B cell (primary cell): ENCODE measurements at regions of chr5 and their contacts with region 1.

Region 1: GRCh38 chr5:150357326-150358260 is at the start of gene TCOF1:
- DNase-seq: peak; percentile 97
- ATAC-seq: peak; percentile 99
- H3K4me3 ChIP-seq: peak within 1 kb of the TSS; percentile 53 to 77 (median 69)
- H3K4me3 Mint-ChIP-seq: peak within 1 kb of the TSS; percentile 90
- H3K27ac ChIP-seq: peak within 1 kb of the TSS; percentile 23 to 68
- H3K27ac Mint-ChIP-seq: peak within 1 kb of the TSS; percentile 88
- H3K4me1 ChIP-seq: peaks cover 35 to 54% of the 10 kb centered on the region in 2 donors
- H3K4me1 Mint-ChIP-seq: peaks cover 50% of the 10 kb centered on the region
- H3K27me3 ChIP-seq: no peaks in the 10 kb centered on the region
- H3K27me3 Mint-ChIP-seq: no peaks in the 10 kb centered on the region
- CTCF ChIP-seq: no peak
- total RNA-seq, gene TCOF1: 62.4 and 66.5 TPM in 2 replicates

Region 2: DNA sequence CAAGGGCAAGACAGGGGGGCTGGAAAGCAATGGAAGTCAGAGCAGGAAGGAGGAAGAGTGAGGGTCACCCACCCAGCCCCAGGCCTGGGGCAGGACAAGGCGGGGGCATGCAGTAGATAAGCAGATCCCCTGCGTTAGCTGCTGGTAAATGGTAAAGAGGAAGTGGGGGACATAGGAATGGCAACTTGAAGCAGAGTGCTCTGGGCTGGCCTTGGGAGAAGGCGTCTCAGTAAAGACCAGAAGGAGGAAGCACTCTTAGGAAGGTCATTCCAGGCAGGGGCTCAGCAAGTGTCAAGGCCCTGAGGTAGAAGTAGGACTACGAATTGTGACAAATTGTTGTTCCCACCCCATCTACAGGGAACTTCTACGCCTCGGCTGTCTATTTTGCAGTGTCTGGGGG is 15.0 kb after region 1 on chr5:
- CTCF ChIA-PET with region 1: no interaction called
- POLR2A ChIA-PET with region 1: no interaction called
- intact Hi-C with region 1: no loop called
- DNase-seq: no peak
- ATAC-seq: no peak
- H3K4me3 ChIP-seq: no peak overlapping the region
- H3K4me3 Mint-ChIP-seq: no peak overlapping the region
- H3K27ac ChIP-seq: no peak overlapping the region
- H3K27ac Mint-ChIP-seq: no peak overlapping the region
- H3K4me1 ChIP-seq: no peaks in the 10 kb centered on the region
- H3K4me1 Mint-ChIP-seq: no peaks in the 10 kb centered on the region
- H3K27me3 ChIP-seq: no peaks in the 10 kb centered on the region
- H3K27me3 Mint-ChIP-seq: no peaks in the 10 kb centered on the region
- CTCF ChIP-seq: no peak

Region 3: GRCh38 chr5:150656191-150657132 is 298.9 kb after region 1 on chr5:
- CTCF ChIA-PET with region 1: no interaction called
- POLR2A ChIA-PET with region 1: no interaction called
- intact Hi-C with region 1: loop called (anchors 2 kb)
- DNase-seq: peak; percentile 89
- ATAC-seq: peak; percentile 91
- H3K4me3 ChIP-seq: peak overlapping the region; percentile 21 to 69 (median 59)
- H3K4me3 Mint-ChIP-seq: peak overlapping the region; percentile 81
- H3K27ac ChIP-seq: no peak overlapping the region
- H3K27ac Mint-ChIP-seq: peak overlapping the region; percentile 84
- H3K4me1 ChIP-seq: peaks cover 10 to 15% of the 10 kb centered on the region in 2 donors
- H3K4me1 Mint-ChIP-seq: peaks cover 19% of the 10 kb centered on the region
- H3K27me3 ChIP-seq: no peaks in the 10 kb centered on the region
- H3K27me3 Mint-ChIP-seq: peaks cover 4% of the 10 kb centered on the region
- CTCF ChIP-seq: peak; percentile 77

Region 4: GRCh38 chr5:150700594-150701293 is 343.2 kb after region 1 on chr5 and contains the start of gene RBM22:
- CTCF ChIA-PET with region 1: no interaction called
- POLR2A ChIA-PET with region 1: no interaction called
- intact Hi-C with region 1: loop called (anchors 2 kb)
- DNase-seq: peak; percentile 94
- ATAC-seq: peak; percentile 96
- H3K4me3 ChIP-seq: peak within 1 kb of the TSS; percentile 65 to 100 (median 99)
- H3K4me3 Mint-ChIP-seq: no peak within 1 kb of the TSS
- H3K27ac ChIP-seq: peak within 1 kb of the TSS; percentile 96 to 97
- H3K27ac Mint-ChIP-seq: no peak within 1 kb of the TSS
- H3K4me1 ChIP-seq: peaks cover 15 to 17% of the 10 kb centered on the region in 2 donors
- H3K4me1 Mint-ChIP-seq: peaks cover 8% of the 10 kb centered on the region
- H3K27me3 ChIP-seq: no peaks in the 10 kb centered on the region
- H3K27me3 Mint-ChIP-seq: no peaks in the 10 kb centered on the region
- CTCF ChIP-seq: peak; percentile 84
- total RNA-seq, gene RBM22: 88.4 and 89.4 TPM in 2 replicates